ENCODE measurements at regions of chr17 and their contacts with region 1.

Region 1: GRCh38 chr17:7351665-7352501 is at the start of gene KCTD11:
- DNase-seq: peak; percentile 75 to 95 (median 87)

Region 2: GRCh38 chr17:7394452-7395191 is 42.7 kb after region 1 on chr17 and contains the start of gene PLSCR3:
- intact Hi-C with region 1: loop called (anchors 5 kb)
- DNase-seq: peak; percentile 51 to 91 (median 84)

Region 3: DNA sequence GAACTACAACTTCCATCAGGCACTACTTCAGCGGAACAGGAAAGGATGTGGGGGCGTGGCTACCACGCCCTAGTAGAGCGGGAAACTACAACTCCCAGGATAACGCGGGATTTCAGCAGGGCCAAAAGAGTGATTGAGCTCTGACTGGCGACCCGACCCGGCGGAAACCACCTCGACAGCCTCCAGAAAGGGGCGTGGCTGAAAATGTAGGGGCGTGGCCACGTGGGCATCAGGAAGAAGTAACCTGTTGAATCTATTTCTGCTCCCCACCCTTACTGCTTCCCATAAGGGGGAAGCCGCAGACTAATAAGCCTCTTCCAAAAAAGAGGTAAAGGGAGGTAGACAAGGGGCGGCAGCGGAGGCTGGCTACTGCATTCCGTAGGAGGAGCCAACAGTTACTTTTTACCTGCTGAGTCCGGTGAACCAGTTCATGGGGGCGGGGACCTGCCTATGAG is 83.4 kb after region 1 on chr17 and contains the start of gene TMEM102:
- intact Hi-C with region 1: loop called (anchors 10 kb)
- DNase-seq: peak; percentile 85 to 97 (median 94)

Region 4: DNA sequence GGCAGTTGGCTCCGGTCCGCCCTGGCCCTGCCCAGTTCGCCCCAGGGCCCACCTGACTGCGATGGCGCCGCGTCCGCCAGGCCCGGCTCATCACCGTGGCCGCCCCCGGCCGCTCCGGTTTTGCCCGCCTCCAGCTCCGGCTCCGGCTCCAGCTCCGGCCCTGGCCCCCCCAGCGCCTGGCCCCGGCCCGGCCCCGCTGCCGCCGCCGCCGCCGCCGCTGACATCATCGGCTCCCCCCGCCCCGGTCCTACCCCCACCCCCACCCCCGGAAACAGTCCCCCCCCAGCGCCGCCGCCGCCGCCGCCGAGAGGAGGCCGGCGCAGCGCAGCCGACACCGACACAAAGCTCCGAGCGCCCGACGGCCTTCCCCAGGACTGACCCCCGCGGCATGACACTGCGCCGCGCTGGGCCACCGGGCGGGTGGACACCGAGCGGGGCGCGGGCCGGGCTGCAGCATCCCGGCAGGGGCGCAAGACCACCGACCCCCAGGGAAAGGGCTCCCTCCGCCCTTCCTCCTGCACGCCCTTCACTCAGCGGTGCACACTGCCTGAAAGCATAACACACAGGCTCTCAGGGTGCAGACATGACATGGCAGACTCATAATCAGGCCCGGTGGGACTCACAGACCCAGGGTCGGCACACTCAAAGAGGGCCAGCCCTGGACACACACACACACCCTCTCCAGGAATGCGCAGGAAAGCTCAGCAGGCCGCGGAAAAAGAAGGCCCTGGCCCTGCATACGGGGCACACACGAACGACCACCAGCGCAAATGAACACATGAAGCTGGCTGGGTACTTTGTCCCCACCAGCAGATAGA is 127.7 kb after region 1 on chr17 and contains the start of gene ZBTB4:
- intact Hi-C with region 1: loop called (anchors 5 kb)
- DNase-seq: peak in 40 of 42 donors; percentile 33 to 85 (median 70)

Region 5: DNA sequence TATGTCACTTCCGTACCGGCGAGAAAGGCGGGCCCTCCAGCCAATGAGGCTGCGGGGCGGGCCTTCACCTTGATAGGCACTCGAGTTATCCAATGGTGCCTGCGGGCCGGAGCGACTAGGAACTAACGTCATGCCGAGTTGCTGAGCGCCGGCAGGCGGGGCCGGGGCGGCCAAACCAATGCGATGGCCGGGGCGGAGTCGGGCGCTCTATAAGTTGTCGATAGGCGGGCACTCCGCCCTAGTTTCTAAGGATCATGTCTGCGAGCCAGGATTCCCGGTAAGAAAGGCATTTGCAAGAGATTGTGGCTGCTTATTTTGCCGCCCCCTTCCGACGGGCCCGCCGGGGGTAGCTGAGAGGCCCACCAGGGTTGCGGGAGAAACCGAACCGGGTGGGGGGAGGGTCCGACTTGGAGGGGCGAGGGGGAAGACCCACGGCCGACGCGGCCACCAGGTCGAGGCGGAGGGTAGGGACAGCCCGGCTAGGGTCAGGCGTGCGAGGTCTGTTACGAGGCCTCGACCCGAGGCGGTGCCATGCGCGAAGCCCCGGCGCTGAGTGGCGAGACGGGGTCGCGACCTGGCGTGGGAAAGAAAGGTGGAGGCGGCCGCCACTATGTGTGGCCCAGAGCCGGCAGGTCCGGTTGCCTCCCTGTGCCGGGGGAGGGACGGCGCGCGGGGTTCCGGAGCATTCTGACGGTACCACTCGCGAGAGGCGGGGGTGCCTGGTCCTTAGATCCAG is 220.9 kb after region 1 on chr17:
- intact Hi-C with region 1: loop called (anchors 10 kb)
- DNase-seq: peak; percentile 98 to 100 (median 100)

Measured in head of caudate nucleus (tissue), 42 donors.